Dendritic cell treated with granulocyte-macrophage colony-stimulating factor and Interleukin-4, amounts not matched to agents 40 ng/mL and 50 ng/mL, for 4 days (primary cell): ENCODE measurements at regions of chrX and their contacts with region 1.

Region 1: GRCh38 chrX:149286940-149287349 is 218.2 kb downstream of the IDS start:
- H3K4me3 Mint-ChIP-seq: no peak overlapping the region
- H3K27ac Mint-ChIP-seq: no peak overlapping the region
- H3K4me1 Mint-ChIP-seq: no peaks in the 10 kb centered on the region
- H3K27me3 Mint-ChIP-seq: no peaks in the 10 kb centered on the region

Region 2: DNA sequence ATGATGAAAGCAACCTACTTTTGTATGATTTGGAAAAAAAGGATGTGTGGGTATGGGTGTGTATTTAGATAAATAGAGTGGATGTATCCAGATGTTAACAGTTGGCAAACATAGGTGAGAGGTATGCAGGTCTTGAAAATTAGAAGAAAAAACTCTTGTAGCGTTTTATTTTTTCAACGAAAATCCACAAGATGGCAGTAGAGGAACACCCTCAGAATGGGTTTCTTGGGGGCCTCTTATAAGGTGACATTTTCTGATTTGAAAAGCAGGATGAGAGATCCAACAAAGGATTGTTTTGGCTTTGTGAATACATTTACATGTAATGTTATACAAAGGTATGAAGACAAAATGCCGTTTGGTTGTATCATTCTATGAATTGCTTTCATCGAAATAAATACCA is 1237.5 kb before region 1 on chrX:
- intact Hi-C with region 1: loop called (anchors 2 kb)
- H3K4me3 Mint-ChIP-seq: no peak overlapping the region
- H3K27ac Mint-ChIP-seq: no peak overlapping the region
- H3K4me1 Mint-ChIP-seq: no peaks in the 10 kb centered on the region
- H3K27me3 Mint-ChIP-seq: no peaks in the 10 kb centered on the region

Region 3: GRCh38 chrX:148133105-148133725 is 1153.7 kb before region 1 on chrX:
- intact Hi-C with region 1: loop called (anchors 5 kb)
- H3K4me3 Mint-ChIP-seq: no peak overlapping the region
- H3K27ac Mint-ChIP-seq: no peak overlapping the region
- H3K4me1 Mint-ChIP-seq: no peaks in the 10 kb centered on the region
- H3K27me3 Mint-ChIP-seq: no peaks in the 10 kb centered on the region